ENCODE measurements at regions of chr9 and their contacts with region 1.

Region 1: DNA sequence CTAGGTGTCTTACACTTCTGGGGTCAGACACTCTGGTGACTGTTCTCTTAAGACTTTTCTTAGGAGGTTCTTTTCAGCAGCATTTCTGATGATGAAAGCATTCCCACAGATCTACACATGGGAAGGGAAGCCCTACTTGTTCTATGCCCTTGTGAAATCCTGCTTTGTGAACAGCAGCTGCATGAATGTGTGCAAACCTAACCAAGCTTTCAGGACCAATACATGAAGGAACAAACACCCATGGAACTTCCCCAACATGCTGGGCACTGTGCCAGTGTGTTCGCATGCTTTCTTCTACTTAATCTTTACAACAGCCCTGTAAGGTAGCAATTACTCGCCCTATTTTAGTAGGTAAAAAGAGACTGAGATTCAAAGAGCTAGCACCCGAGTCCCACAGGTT is 439.9 kb upstream of the KLF4 start:
- DNase-seq: peak; percentile 84 to 95 (median 88)
- H3K4me3 ChIP-seq: peak overlapping the region in 1 of 3 experiments; percentile 13
- H3K4me3 Mint-ChIP-seq: no peak overlapping the region
- H3K27ac ChIP-seq: peak overlapping the region; percentile 70 to 86
- H3K27ac Mint-ChIP-seq: peak overlapping the region; percentile 85 to 95 (median 90)
- H3K4me1 ChIP-seq: peaks cover 69 to 74% of the 10 kb centered on the region in 2 donors
- H3K4me1 Mint-ChIP-seq: peaks cover 78% of the 10 kb centered on the region
- H3K27me3 ChIP-seq: no peaks in the 10 kb centered on the region
- H3K27me3 Mint-ChIP-seq: peaks cover 0 to 3% (median 0%) of the 10 kb centered on the region in 3 donors
- CTCF ChIP-seq: no peak

Region 2: DNA sequence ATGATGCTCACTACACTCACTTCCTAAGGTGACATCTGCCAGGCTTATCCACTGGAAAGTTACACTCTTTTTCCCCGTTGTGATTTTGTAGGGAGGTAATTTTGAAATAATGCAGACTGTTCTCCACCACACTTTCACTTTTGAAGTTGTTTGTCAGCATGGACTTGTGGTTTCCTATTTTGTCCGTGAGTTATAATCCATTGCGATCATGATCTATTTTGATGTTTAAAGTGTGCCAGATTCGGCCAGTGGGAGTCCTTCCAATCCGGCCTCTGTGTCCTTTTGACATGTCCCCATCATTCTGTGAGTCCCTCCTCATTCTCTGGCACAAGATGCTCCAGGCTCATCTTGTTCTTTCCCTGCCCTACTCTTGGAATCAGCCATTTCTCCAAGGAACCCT is 228.6 kb before region 1 on chr9:
- intact Hi-C with region 1: no loop called
- DNase-seq: no peak
- H3K4me3 ChIP-seq: peak overlapping the region in 2 of 3 experiments; percentile 51 to 63
- H3K4me3 Mint-ChIP-seq: peak overlapping the region; percentile 79 to 91
- H3K27ac ChIP-seq: peak overlapping the region in 1 of 2 donors; percentile 67
- H3K27ac Mint-ChIP-seq: peak overlapping the region; percentile 18 to 92 (median 73)
- H3K4me1 ChIP-seq: peaks cover 25 to 59% of the 10 kb centered on the region in 2 donors
- H3K4me1 Mint-ChIP-seq: peaks cover 55% of the 10 kb centered on the region
- H3K27me3 ChIP-seq: no peaks in the 10 kb centered on the region
- H3K27me3 Mint-ChIP-seq: peaks cover 0 to 2% (median 0%) of the 10 kb centered on the region in 3 donors
- CTCF ChIP-seq: no peak

Region 3: GRCh38 chr9:107755284-107755683 is 174.2 kb before region 1 on chr9:
- intact Hi-C with region 1: loop called in 1 of 2 experiments (anchors 5 kb)
- DNase-seq: peak; percentile 82 to 94 (median 84)
- H3K4me3 ChIP-seq: no peak overlapping the region
- H3K4me3 Mint-ChIP-seq: no peak overlapping the region
- H3K27ac ChIP-seq: peak overlapping the region; percentile 74 to 79
- H3K27ac Mint-ChIP-seq: peak overlapping the region; percentile 76 to 95 (median 89)
- H3K4me1 ChIP-seq: peaks cover 69 to 77% of the 10 kb centered on the region in 2 donors
- H3K4me1 Mint-ChIP-seq: peaks cover 75% of the 10 kb centered on the region
- H3K27me3 ChIP-seq: no peaks in the 10 kb centered on the region
- H3K27me3 Mint-ChIP-seq: no peaks in the 10 kb centered on the region
- CTCF ChIP-seq: no peak

Region 4: GRCh38 chr9:107805159-107805558 is 124.3 kb before region 1 on chr9:
- intact Hi-C with region 1: no loop called
- DNase-seq: no peak
- H3K4me3 ChIP-seq: no peak overlapping the region
- H3K4me3 Mint-ChIP-seq: no peak overlapping the region
- H3K27ac ChIP-seq: no peak overlapping the region
- H3K27ac Mint-ChIP-seq: no peak overlapping the region
- H3K4me1 ChIP-seq: peaks cover 2 to 6% of the 10 kb centered on the region in 2 donors
- H3K4me1 Mint-ChIP-seq: peaks cover 16% of the 10 kb centered on the region
- H3K27me3 ChIP-seq: no peaks in the 10 kb centered on the region
- H3K27me3 Mint-ChIP-seq: peaks cover 0 to 2% (median 1%) of the 10 kb centered on the region in 3 donors
- CTCF ChIP-seq: no peak

Region 5: DNA sequence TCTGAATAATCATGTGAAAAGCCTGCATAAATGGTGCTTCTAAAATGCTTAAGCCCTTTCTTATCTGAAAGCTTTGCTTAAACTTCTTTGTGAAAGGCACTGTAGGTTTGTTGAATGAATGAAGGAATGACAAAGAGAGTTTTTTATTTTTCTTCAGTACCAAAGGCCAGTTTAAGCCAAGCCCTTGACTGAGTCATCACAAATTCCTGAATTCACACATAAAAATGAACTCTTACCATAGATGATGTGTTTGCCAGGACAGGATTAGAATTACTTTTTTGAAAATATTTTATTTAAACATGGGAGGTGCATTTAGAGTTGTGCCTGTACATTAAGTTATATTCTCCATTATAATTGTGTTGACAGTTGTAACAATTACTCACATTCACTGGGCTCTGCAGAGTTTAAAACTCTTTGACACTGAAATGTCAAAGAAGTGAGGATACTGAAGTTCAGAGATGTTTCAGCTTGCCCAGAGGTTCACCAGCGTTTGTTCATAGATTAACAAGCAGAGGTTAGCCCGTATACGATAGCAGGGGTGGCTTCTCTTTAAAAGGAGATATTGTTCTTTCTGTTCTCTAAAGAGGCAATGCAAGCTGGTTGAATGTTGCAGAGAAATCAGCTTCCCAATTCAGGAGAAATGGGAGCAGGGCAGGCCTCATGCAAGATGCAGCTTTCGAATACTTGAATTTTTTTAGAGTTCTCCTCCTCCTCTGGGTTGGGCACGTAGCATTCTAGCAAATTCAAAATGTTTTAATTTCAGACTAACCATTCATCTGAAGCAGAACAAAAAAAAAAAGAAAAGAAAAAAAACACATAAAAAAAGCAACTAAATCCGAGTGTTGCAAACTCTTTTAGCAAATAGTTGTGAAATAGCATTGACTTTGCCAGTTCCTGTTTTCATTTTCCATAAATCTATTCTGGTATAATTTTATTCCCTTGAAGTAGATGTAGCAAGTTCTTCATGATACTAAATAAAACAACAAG is 81.2 kb before region 1 on chr9:
- intact Hi-C with region 1: loop called in 1 of 2 experiments (anchors 5 kb)
- DNase-seq: peak; percentile 46 to 85 (median 59)
- H3K4me3 ChIP-seq: peak overlapping the region; percentile 13 to 61 (median 36)
- H3K4me3 Mint-ChIP-seq: peak overlapping the region; percentile 40 to 76
- H3K27ac ChIP-seq: peak overlapping the region; percentile 88 to 93
- H3K27ac Mint-ChIP-seq: peak overlapping the region; percentile 84 to 97 (median 94)
- H3K4me1 ChIP-seq: peaks cover 45 to 66% of the 10 kb centered on the region in 2 donors
- H3K4me1 Mint-ChIP-seq: peaks cover 60% of the 10 kb centered on the region
- H3K27me3 ChIP-seq: no peaks in the 10 kb centered on the region
- H3K27me3 Mint-ChIP-seq: peaks cover 0 to 1% (median 0%) of the 10 kb centered on the region in 3 donors
- CTCF ChIP-seq: no peak

Region 6: DNA sequence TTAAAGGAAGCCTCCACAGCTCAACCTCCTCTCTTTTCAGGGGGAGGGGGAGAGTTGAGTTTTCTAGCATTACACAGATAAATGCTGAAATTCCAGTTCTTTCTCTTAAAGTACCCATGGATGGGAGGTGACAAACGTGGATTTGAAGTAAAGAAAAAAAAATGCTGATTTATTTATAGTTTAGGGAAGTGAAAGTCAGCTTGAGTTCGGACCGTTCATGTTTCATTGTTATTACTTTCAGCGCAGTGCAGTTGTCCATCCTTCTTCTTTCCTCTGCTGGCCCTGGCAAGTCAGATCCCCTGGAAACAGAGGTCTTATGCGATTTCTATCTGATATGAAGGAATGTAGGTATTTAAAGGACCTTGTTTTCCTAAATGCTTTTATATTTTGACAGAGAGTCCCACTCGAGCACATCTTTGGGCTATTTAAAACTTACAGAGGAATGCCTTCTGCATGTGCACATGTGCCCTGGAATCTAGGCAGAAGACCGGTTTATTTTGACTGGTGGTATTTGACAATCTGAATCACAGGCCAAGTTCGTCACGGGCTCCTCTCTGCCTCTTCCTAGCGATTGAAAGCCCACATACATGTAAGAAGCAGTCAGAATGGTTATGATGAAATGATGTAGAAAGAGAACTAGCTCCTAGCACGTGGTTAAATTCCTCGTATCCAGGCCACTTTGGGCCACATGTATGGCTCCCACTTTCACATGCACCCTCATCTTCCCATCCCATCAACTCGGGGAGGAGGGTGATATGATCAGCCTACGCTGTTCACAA is 54.7 kb before region 1 on chr9:
- intact Hi-C with region 1: loop called in 1 of 2 experiments (anchors 5 kb)
- DNase-seq: peak; percentile 62 to 79 (median 69)
- H3K4me3 ChIP-seq: peak overlapping the region in 1 of 3 experiments; percentile 46
- H3K4me3 Mint-ChIP-seq: peak overlapping the region in 1 of 2 donors; percentile 59
- H3K27ac ChIP-seq: peak overlapping the region; percentile 71 to 88
- H3K27ac Mint-ChIP-seq: peak overlapping the region; percentile 89 to 97 (median 95)
- H3K4me1 ChIP-seq: peaks cover 63 to 76% of the 10 kb centered on the region in 2 donors
- H3K4me1 Mint-ChIP-seq: peaks cover 78% of the 10 kb centered on the region
- H3K27me3 ChIP-seq: no peaks in the 10 kb centered on the region
- H3K27me3 Mint-ChIP-seq: no peaks in the 10 kb centered on the region
- CTCF ChIP-seq: no peak

Region 7: DNA sequence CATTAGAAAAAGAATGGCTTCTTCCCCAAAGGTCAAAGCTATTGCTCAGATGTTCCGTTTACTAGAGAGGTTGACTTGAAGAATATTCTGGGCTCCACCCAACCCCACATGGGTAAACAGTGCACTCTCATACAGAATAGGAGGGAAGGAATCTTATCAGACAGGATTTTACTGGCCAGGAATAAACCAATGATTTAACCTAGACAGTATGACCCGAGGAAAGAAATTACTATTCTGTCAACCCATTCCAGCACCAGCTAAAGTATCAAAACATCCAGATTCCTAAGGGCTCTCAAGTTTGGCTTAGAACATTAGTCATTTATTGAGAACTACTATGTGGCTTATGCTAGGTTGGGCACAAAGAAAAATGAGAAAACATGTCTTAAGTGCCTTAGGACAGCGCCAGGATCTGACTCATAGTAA is 53.7 kb after region 1 on chr9:
- intact Hi-C with region 1: loop called (anchors 5 to 10 kb)
- DNase-seq: peak; percentile 15 to 49 (median 39)
- H3K4me3 ChIP-seq: peak overlapping the region in 1 of 3 experiments; percentile 18
- H3K4me3 Mint-ChIP-seq: peak overlapping the region in 1 of 2 donors; percentile 28
- H3K27ac ChIP-seq: peak overlapping the region in 1 of 2 donors; percentile 84
- H3K27ac Mint-ChIP-seq: peak overlapping the region; percentile 81 to 96 (median 91)
- H3K4me1 ChIP-seq: peaks cover 64 to 73% of the 10 kb centered on the region in 2 donors
- H3K4me1 Mint-ChIP-seq: peaks cover 32% of the 10 kb centered on the region
- H3K27me3 ChIP-seq: no peaks in the 10 kb centered on the region
- H3K27me3 Mint-ChIP-seq: peaks cover 0 to 1% (median 0%) of the 10 kb centered on the region in 3 donors
- CTCF ChIP-seq: no peak

Region 8: DNA sequence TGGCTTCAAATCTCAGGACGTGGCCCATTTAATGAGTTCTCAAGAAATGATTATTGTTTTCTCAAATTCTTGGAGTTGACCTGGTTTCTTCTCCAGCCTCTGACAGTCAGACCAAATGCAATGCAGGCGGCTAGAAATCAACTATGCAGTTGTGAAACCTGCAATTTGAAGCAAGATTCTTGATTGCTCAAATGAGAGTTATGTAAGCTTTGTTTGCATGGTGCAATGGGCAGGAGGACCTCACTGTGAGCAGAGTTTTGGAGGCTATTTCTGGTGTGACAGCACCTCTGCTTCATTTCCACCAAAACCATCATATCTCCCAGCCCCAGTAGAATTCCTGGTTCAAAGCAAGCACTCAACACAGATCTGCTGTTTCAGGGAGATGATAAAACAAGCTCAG is 60.1 kb after region 1 on chr9:
- intact Hi-C with region 1: loop called (anchors 5 to 10 kb)
- DNase-seq: peak; percentile 84 to 91 (median 87)
- H3K4me3 ChIP-seq: peak overlapping the region in 1 of 3 experiments; percentile 48
- H3K4me3 Mint-ChIP-seq: peak overlapping the region in 1 of 2 donors; percentile 83
- H3K27ac ChIP-seq: peak overlapping the region; percentile 62 to 87
- H3K27ac Mint-ChIP-seq: peak overlapping the region; percentile 93 to 99 (median 96)
- H3K4me1 ChIP-seq: peaks cover 66 to 76% of the 10 kb centered on the region in 2 donors
- H3K4me1 Mint-ChIP-seq: peaks cover 74% of the 10 kb centered on the region
- H3K27me3 ChIP-seq: no peaks in the 10 kb centered on the region
- H3K27me3 Mint-ChIP-seq: peaks cover 0 to 4% (median 0%) of the 10 kb centered on the region in 3 donors
- CTCF ChIP-seq: no peak

Region 9: DNA sequence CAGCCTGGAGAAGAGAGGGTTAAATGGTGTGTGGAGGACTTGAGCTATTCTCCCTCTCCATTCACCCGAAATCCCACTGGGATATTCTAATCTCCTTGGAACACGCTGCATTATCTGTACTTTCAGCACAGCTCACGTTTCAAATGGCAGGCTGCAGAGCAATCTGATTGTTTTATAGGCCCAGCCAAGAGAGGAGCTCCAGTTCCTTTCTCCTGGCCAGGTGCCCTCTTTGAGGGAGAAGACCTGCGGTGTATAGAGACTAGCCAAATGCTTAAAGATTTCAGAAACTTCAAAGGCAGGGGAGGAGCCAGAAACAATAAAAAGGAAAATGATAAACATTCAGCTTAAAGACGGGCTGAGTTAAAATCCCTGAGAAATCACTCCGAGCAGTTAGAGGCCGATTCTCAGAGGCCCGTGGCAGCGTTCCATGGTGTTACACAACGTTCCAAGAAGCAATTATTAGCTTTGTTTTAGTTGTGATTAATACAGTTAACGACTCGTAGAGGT is 124.2 kb after region 1 on chr9:
- intact Hi-C with region 1: loop called in 1 of 2 experiments (anchors 10 kb)
- DNase-seq: no peak
- H3K4me3 ChIP-seq: no peak overlapping the region
- H3K4me3 Mint-ChIP-seq: no peak overlapping the region
- H3K27ac ChIP-seq: no peak overlapping the region
- H3K27ac Mint-ChIP-seq: no peak overlapping the region
- H3K4me1 ChIP-seq: peaks cover 38 to 41% of the 10 kb centered on the region in 2 donors
- H3K4me1 Mint-ChIP-seq: peaks cover 41% of the 10 kb centered on the region
- H3K27me3 ChIP-seq: no peaks in the 10 kb centered on the region
- H3K27me3 Mint-ChIP-seq: peaks cover 1 to 2% (median 1%) of the 10 kb centered on the region in 3 donors
- CTCF ChIP-seq: no peak

Measured in CD14-positive monocyte (primary cell).